ENCODE measurements at regions of chr10 and their contacts with region 1.

Region 1: GRCh38 chr10:113689057-113689456 is 9.3 kb downstream of the CASP7 start:
- DNase-seq: no peak
- H3K4me3 Mint-ChIP-seq: peak overlapping the region; percentile 24
- H3K27ac Mint-ChIP-seq: peak overlapping the region; percentile 26
- H3K4me1 Mint-ChIP-seq: peaks cover 33% of the 10 kb centered on the region
- H3K27me3 Mint-ChIP-seq: no peaks in the 10 kb centered on the region

Region 2: DNA sequence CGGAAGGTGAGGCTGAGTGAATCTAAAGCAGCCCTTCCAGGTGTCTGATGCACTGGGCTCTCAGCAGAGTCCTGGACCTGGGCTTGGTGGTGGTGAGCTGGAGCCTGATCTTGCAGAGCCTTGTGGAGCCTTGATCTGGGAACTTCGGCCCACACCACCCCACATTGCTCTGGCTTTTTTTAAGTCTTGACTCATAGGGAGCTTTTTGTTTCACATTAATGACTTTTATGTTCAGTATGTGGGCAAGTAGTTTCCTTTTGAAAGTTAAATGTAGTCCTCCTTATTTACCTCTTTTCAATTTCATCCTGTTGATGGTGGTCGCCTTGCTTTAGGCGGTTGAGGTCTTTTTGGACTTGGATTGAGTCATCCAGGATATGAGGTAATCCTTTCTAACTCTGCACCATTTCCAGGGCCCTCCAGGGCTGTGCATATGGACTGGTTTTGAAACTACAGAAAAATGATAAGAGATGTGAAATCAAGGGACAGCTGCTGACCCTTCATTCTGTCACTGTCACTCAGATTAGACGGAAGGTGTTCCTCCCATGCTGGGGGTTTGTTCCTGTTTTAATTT is 22.3 kb before region 1 on chr10:
- intact Hi-C with region 1: loop called (anchors 1 kb)
- DNase-seq: no peak
- H3K4me3 Mint-ChIP-seq: no peak overlapping the region
- H3K27ac Mint-ChIP-seq: peak overlapping the region; percentile 37
- H3K4me1 Mint-ChIP-seq: peaks cover 12% of the 10 kb centered on the region
- H3K27me3 Mint-ChIP-seq: peaks cover 14% of the 10 kb centered on the region

Region 3: GRCh38 chr10:113802997-113803396 is 113.9 kb after region 1 on chr10:
- intact Hi-C with region 1: no loop called
- DNase-seq: no peak
- H3K4me3 Mint-ChIP-seq: no peak overlapping the region
- H3K27ac Mint-ChIP-seq: no peak overlapping the region
- H3K4me1 Mint-ChIP-seq: peaks cover 2% of the 10 kb centered on the region
- H3K27me3 Mint-ChIP-seq: peaks cover 42% of the 10 kb centered on the region

Region 4: DNA sequence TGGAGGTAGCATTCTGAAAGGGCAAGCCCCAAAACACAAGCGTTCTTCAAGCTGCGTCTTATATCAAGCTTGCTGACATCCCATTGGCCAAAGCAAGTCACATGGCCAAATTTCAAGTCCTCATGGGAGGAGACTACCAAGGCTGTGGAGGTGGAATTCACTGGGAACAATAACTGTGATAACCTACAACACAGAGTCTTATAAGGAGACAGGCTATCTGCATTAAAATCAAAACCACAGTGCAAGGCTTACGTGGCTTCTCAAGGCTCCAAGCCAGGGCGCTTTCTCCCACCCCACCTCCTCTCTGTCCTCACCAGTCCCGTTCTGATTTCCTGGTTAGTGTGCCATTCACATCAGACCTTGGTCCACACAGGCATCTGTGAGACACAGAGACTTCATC is 394.0 kb after region 1 on chr10:
- intact Hi-C with region 1: loop called (anchors 5 kb)
- DNase-seq: no peak
- H3K4me3 Mint-ChIP-seq: no peak overlapping the region
- H3K27ac Mint-ChIP-seq: no peak overlapping the region
- H3K4me1 Mint-ChIP-seq: peaks cover 1% of the 10 kb centered on the region
- H3K27me3 Mint-ChIP-seq: peaks cover 40% of the 10 kb centered on the region

Measured in activated T-helper 2 cell treated with anti-CD3 and anti-CD28 coated beads, Interferon-gamma antibody, Interleukin-2, Interleukin-4, amounts not matched to agents 10 μg/mL and 5 μg/mL and 100 μg/mL, durations not matched to agents 14 hours and 24 hours and 36 hours (primary cell).